Gastrocnemius medialis (tissue), 4 donors: ENCODE measurements at regions of chr17 and their contacts with region 1.

Region 1: DNA sequence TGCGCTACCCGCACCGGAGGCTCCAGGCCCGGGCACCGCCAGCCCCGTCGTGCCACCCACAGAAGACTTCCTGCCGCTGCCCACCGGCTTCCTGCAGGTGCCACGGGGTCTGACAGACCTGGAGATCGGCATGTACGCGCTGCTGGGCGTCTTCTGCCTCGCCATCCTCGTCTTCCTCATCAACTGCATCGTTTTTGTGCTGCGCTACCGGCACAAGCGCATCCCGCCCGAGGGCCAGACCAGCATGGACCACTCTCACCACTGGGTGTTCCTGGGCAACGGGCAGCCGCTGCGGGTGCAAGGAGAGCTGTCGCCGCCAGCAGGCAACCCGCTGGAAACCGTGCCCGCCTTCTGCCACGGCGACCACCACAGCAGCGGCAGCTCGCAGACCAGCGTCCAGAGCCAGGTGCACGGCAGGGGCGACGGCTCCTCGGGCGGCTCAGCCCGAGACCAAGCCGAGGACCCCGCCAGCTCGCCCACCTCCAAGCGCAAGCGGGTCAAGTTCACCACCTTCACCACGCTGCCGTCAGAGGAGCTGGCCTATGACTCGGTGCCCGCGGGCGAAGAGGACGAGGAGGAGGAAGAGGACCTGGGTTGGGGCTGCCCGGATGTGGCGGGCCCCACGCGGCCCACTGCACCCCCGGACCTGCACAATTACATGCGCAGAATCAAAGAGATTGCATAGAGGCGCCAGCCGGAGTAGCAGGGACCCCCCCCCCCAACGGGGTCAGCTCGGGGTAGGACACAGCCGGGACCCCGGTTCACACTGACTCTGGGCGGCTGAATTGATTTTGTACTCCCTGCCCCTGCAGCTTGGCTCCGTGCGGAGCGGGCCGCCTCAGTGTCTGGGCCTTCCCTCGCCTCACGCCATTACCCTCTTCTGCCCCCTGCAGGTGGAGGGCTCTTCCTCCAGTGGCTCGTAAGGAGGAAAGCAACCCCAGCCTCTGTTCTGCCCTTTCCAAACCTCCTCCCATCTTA is 58.5 kb downstream of the TMEM132E start:
- DNase-seq: peak; percentile 44 to 48
- ATAC-seq: peak; percentile 87 to 89
- H3K4me3 ChIP-seq: peak overlapping the region; percentile 32 to 58 (median 47)
- H3K27ac ChIP-seq: no peak overlapping the region
- H3K4me1 ChIP-seq: no peaks in the 10 kb centered on the region
- H3K27me3 ChIP-seq: peaks cover 0 to 6% (median 0%) of the 10 kb centered on the region in 3 donors
- CTCF ChIP-seq: peak; percentile 50 to 80 (median 67)
- POLR2A ChIP-seq: no peak

Region 2: DNA sequence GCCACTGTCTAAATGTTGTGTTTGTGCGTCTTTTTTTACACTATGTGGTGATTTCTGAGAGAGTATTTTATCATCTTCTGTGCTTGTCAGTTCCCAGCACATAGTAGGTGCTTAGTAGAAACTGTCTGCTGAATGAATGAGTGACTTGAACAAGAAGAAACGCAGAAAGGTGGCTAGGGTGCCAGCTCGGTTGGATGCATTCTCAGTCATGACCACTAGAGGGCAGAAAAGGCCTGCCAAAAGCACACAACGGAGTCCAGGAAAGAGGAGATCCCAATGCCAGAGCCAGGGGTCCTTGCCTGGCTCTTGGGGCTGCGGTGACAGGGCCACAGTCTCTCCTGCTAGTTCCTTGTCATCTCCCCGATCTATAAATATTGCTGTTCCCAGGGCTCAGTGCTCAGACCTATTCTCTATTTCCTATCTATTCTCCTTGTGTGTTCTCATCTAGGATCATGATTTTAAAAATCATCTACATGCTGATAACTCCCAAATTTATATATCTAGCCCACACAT is 217.5 kb before region 1 on chr17:
- in situ Hi-C with region 1: loop called in 1 of 4 experiments (anchors 25 kb)
- intact Hi-C with region 1: loop called (anchors 1 kb)
- DNase-seq: peak; percentile 18 to 34
- ATAC-seq: peak; percentile 26 to 41
- H3K4me3 ChIP-seq: no peak overlapping the region
- H3K27ac ChIP-seq: no peak overlapping the region
- H3K4me1 ChIP-seq: peaks cover 0 to 3% of the 10 kb centered on the region in 2 donors
- H3K27me3 ChIP-seq: peaks cover 10 to 19% (median 17%) of the 10 kb centered on the region in 3 donors
- CTCF ChIP-seq: peak; percentile 74 to 91 (median 84)
- POLR2A ChIP-seq: no peak

Region 3: GRCh38 chr17:34651402-34651811 is 13.6 kb after region 1 on chr17:
- in situ Hi-C with region 1: no loop called
- intact Hi-C with region 1: no loop called
- DNase-seq: no peak
- ATAC-seq: no peak
- H3K4me3 ChIP-seq: no peak overlapping the region
- H3K27ac ChIP-seq: no peak overlapping the region
- H3K4me1 ChIP-seq: no peaks in the 10 kb centered on the region
- H3K27me3 ChIP-seq: peaks cover 0 to 2% (median 0%) of the 10 kb centered on the region in 3 donors
- CTCF ChIP-seq: no peak
- POLR2A ChIP-seq: no peak